GM23248 (cell line): ENCODE measurements at regions of chr11 and their contacts with region 1.

Region 1: DNA sequence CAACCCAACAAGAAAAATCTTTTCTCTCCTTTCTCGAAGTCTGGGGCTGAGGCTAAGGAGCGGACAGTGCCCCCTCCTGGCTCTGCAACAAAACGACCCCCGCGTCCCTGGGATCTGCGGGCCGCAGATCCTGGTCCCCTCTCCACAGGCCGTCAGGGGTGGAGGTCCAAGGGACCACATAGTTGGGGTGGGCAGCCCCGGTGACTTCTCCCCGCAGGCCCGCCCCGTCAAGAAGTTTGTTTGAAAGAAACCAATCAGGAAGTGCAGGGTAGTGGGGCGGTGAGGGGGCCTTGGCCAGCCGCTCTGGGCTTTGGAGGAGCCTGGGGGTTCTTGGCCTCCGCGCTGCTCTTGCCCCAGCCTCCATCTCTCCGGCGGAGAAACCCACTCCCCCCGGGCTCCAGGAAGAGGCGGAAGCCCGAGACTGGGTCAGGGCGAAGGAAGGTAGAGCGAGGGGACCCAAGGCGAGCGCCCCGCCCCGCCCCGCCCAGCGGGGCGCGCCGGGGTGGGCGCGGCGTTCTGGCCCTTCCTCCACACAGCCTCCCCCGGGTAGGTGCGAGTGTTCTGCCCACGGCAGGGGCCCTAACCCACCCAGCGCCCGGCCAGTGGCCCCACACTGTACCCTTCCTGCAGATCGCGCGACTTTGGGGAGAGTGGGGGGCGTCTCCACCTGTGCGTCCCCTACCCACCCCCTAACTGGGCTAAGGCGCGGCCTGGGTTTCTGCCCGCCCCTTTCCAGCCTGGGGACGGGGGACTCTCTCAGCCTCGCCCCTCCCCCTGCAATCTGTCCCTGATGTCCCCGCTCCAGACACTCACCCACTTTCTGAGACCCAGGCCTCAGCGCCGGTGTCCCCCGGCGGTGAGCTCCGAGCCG is 1.3 kb downstream of the TP53I11 start:
- DNase-seq: peak; percentile 61
- H3K4me3 ChIP-seq: peak overlapping the region; percentile 84
- H3K27ac ChIP-seq: no peak overlapping the region
- H3K4me1 ChIP-seq: no peaks in the 10 kb centered on the region
- H3K27me3 ChIP-seq: no peaks in the 10 kb centered on the region

Region 2: DNA sequence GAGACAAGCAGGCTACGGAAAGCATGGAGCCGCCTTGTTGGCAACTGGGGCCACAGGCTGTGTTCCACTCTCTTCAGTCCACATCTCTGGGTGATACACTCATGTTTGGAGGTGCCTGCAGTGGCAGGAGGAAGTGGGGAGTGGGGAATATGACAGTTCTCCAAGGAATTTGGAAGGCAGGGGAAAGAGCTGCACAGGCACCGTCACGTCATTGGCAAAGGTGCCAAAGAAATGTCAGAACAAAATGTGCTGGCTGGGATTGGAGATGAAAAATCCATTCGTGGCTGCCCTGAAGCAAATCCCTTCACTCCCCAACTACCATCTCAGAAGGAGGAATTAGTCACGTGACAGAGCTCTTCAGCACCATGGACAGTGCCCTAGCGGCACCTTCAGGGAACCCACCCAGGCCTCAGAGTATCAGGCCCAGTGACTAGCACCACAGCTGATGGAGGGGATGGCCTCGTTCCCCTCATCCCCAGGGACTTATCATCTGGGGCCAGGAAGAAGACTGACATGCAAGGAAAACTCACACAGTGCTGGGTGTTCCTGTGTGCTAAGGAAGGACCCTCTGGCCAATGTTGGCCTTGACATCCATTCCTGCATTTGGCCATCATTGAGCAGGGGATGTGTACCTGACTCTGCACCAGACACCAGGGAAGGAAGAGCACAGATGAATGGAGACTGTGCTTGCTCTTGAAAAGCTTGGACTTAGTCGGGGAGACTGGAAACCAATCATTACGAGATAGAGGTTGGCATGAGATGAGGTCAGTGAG is 148.5 kb after region 1 on chr11:
- in situ Hi-C with region 1: loop called (anchors 10 kb)
- DNase-seq: peak; percentile 62
- H3K4me3 ChIP-seq: no peak overlapping the region
- H3K27ac ChIP-seq: no peak overlapping the region
- H3K4me1 ChIP-seq: peaks cover 20% of the 10 kb centered on the region
- H3K27me3 ChIP-seq: peaks cover 21% of the 10 kb centered on the region